ENCODE measurements at regions of chr20 and their contacts with region 1.

Region 1: GRCh38 chr20:41339507-41340326 is 904 bp upstream of the LPIN3 start:
- DNase-seq: peak; percentile 98 to 100
- H3K4me3 ChIP-seq: peak overlapping the region; percentile 51
- H3K4me3 Mint-ChIP-seq: peak overlapping the region; percentile 96
- H3K27ac Mint-ChIP-seq: peak overlapping the region; percentile 69
- H3K4me1 ChIP-seq: peaks cover 25% of the 10 kb centered on the region
- H3K4me1 Mint-ChIP-seq: peaks cover 21% of the 10 kb centered on the region
- H3K27me3 ChIP-seq: no peaks in the 10 kb centered on the region
- H3K27me3 Mint-ChIP-seq: no peaks in the 10 kb centered on the region
- CTCF ChIP-seq: peak; percentile 99 to 100

Region 2: DNA sequence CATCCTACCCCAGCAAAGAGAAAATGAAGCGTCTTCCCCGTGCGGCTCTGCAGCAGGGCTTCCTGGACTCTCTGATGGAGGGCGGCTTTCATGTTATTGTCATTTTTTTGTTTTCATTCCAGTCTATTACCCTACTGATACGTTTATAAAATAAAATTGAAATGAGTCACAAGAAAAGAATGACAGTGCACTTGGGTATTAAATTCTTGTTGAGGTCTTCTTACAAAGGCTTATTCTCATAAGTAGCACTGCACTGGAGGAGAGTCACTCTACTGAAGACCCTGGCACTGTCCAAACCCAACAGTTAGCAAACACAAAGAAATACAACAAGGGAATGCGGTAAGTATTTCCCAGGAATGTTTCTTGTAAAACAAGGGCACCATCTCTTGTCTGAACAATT is 1030.0 kb before region 1 on chr20:
- CTCF ChIA-PET with region 1: no interaction called
- POLR2A ChIA-PET with region 1: no interaction called
- intact Hi-C with region 1: no loop called
- DNase-seq: no peak
- H3K4me3 ChIP-seq: no peak overlapping the region
- H3K4me3 Mint-ChIP-seq: no peak overlapping the region
- H3K27ac Mint-ChIP-seq: no peak overlapping the region
- H3K4me1 ChIP-seq: no peaks in the 10 kb centered on the region
- H3K4me1 Mint-ChIP-seq: no peaks in the 10 kb centered on the region
- H3K27me3 ChIP-seq: no peaks in the 10 kb centered on the region
- H3K27me3 Mint-ChIP-seq: peaks cover 2% of the 10 kb centered on the region
- CTCF ChIP-seq: no peak

Region 3: GRCh38 chr20:41095110-41095969 is 244.4 kb before region 1 on chr20:
- CTCF ChIA-PET with region 1: interaction called, 10 read pairs
- POLR2A ChIA-PET with region 1: no interaction called
- intact Hi-C with region 1: no loop called
- DNase-seq: peak; percentile 66 to 75
- H3K4me3 ChIP-seq: no peak overlapping the region
- H3K4me3 Mint-ChIP-seq: no peak overlapping the region
- H3K27ac Mint-ChIP-seq: no peak overlapping the region
- H3K4me1 ChIP-seq: no peaks in the 10 kb centered on the region
- H3K4me1 Mint-ChIP-seq: no peaks in the 10 kb centered on the region
- H3K27me3 ChIP-seq: no peaks in the 10 kb centered on the region
- H3K27me3 Mint-ChIP-seq: no peaks in the 10 kb centered on the region
- CTCF ChIP-seq: peak; percentile 98 to 99

Region 4: DNA sequence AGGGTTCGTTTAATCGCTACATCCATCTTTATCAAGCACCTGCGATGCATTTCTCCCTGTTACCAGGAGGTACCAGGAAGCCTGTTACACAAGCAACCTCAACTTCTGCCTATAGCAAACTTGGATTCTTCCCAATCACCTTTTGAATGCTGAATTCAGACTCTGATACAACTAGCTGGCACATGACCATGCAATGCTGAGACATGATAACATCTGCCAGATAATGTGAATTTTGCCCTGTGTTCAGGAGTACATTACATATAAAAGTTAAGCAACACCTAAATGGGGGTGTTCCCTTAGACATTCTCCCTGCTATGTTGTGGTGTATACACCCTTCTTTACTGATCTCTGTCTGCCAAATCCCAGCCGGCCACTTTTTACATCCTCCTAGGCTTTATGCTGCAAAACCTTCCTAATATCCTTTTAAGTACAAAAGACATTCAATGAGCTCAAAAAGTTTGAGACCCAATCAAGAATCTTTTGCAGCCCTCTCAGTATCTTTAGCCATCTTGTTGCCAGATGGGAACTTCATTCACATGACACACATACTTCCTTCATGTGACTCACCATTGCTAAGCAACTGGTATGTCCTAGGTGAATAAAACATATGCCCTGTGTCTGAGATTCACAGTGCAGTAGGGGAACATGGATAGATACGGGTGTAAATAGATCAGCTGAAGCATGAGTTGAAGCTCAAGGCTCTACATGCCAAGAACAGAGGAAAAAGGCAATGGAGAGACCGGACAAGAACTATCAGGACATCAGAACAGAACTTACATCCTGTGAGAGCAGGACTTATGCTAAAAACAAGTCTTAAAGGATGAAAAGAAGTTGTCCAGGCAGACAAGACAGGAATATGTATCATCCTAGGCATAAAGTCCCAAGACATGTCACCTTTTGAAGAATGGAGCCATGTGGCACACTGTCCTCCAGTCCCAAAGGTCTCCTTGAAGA is 106.5 kb before region 1 on chr20:
- CTCF ChIA-PET with region 1: interaction called, 52 read pairs
- POLR2A ChIA-PET with region 1: interaction called, 5 read pairs
- intact Hi-C with region 1: loop called (anchors 1 kb)
- DNase-seq: no peak
- H3K4me3 ChIP-seq: no peak overlapping the region
- H3K4me3 Mint-ChIP-seq: peak overlapping the region; percentile 39
- H3K27ac Mint-ChIP-seq: peak overlapping the region; percentile 10
- H3K4me1 ChIP-seq: peaks cover 9% of the 10 kb centered on the region
- H3K4me1 Mint-ChIP-seq: peaks cover 9% of the 10 kb centered on the region
- H3K27me3 ChIP-seq: no peaks in the 10 kb centered on the region; the same call in 1 of the 2 replicates
- H3K27me3 Mint-ChIP-seq: no peaks in the 10 kb centered on the region
- CTCF ChIP-seq: no peak

Region 5: GRCh38 chr20:41350408-41350962 is 10.8 kb after region 1 on chr20:
- CTCF ChIA-PET with region 1: interaction called, 14 read pairs
- POLR2A ChIA-PET with region 1: interaction called, 8 read pairs
- intact Hi-C with region 1: no loop called
- DNase-seq: no peak
- H3K4me3 ChIP-seq: no peak overlapping the region
- H3K4me3 Mint-ChIP-seq: no peak overlapping the region
- H3K27ac Mint-ChIP-seq: no peak overlapping the region
- H3K4me1 ChIP-seq: no peaks in the 10 kb centered on the region
- H3K4me1 Mint-ChIP-seq: no peaks in the 10 kb centered on the region
- H3K27me3 ChIP-seq: no peaks in the 10 kb centered on the region
- H3K27me3 Mint-ChIP-seq: no peaks in the 10 kb centered on the region
- CTCF ChIP-seq: no peak

Region 6: DNA sequence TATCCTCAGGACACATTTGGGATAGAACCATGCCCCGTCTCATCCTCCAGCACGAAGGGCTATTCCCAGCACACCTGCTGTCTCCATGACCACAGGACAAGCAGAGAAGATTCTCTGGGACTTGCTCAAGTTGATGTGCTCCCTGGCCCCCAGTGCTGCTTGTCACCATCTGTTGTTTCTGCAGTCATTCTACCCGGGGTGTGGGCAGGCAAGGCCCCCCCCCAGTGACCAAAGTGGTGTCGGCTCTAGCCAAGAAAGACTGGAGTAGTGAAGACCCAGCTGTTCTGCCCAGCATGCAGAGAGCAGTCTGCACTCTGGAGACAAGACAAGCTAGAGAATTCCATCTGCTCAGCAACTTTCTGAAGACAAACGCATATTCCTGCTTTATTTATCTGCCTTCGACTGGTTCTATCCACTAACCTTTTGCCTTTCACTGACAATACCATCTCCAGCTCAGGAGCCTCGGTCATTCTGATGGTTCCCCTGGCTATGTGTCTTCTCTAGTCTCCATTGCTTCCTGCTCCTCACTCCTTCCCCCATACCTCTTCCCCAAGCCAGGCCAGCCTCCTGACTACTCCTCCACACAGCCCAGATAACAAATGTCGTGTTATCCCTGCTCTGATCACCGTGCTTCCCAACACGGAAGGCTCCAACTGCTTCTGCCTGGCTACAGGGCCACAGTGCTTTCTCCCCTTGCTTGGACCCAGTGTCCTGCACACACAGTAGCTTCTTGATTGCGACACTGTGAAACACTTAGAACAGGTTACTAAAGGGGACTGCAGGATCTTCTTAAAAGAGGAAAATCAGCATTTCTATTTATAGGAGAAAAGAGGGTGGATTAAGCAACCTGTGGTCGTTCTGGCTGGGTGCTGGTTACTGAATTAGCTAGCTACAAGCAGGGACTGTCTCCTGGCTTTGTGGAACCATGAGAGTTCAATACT is 113.6 kb after region 1 on chr20:
- CTCF ChIA-PET with region 1: no interaction called
- POLR2A ChIA-PET with region 1: no interaction called
- intact Hi-C with region 1: no loop called
- DNase-seq: peak in 1 of 2 experiments; percentile 31
- H3K4me3 ChIP-seq: no peak overlapping the region
- H3K4me3 Mint-ChIP-seq: no peak overlapping the region
- H3K27ac Mint-ChIP-seq: no peak overlapping the region
- H3K4me1 ChIP-seq: no peaks in the 10 kb centered on the region
- H3K4me1 Mint-ChIP-seq: peaks cover 8% of the 10 kb centered on the region
- H3K27me3 ChIP-seq: no peaks in the 10 kb centered on the region
- H3K27me3 Mint-ChIP-seq: no peaks in the 10 kb centered on the region
- CTCF ChIP-seq: no peak

Region 7: GRCh38 chr20:41476013-41476752 is 136.5 kb after region 1 on chr20:
- CTCF ChIA-PET with region 1: interaction called, 14 read pairs
- POLR2A ChIA-PET with region 1: interaction called, 3 read pairs
- intact Hi-C with region 1: loop called (anchors 5 kb)
- DNase-seq: no peak
- H3K4me3 ChIP-seq: no peak overlapping the region
- H3K4me3 Mint-ChIP-seq: no peak overlapping the region
- H3K27ac Mint-ChIP-seq: no peak overlapping the region
- H3K4me1 ChIP-seq: no peaks in the 10 kb centered on the region
- H3K4me1 Mint-ChIP-seq: no peaks in the 10 kb centered on the region
- H3K27me3 ChIP-seq: no peaks in the 10 kb centered on the region
- H3K27me3 Mint-ChIP-seq: no peaks in the 10 kb centered on the region
- CTCF ChIP-seq: no peak

Region 8: DNA sequence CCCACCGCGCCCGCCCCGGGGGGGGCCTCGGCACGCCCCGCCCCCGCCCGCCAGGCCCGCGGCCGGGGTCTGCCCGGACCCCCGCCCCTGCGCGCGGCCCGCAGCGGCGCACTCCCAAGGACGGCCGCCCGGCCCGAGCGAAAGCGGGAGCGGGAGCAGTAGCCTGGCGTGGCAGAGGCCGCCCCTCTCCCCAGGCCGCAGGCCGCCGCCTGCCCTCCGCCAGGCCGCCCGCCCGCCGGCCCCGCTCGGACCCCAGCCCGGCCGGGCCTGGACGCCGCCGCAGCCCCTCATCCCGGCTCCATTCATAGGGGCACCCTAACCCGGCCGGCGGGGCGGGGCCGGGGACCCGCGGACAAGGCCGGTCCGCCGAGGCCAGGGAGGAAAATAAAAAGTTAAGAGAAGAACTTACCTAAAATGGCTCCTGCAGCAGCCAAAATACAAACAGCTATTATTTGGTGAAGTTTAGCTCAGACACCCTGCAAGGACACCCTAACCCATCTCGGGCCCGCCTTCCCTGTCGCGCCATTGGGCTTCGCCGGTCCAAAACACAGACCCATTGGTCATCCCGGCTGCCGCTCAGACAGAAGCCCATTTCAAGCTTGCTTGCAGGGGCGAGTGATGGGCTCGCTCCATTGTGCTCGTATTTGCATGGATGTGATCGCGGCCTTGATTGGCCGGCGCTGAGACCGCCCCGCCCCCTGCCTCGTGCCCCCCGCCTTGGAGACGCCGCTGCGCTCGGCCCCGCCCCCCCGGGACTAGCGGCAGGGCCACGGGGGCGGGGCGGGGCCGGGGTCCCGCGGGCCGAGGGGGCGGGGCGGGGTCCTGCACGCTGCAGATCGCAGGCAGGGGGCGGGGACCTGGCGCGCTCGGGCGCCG is 278.5 kb after region 1 on chr20 and contains the start of gene CHD6:
- CTCF ChIA-PET with region 1: interaction called, 7 read pairs
- POLR2A ChIA-PET with region 1: no interaction called
- intact Hi-C with region 1: loop called (anchors 2 kb)
- DNase-seq: peak; percentile 100
- H3K4me3 ChIP-seq: peak within 1 kb of the TSS; percentile 67
- H3K4me3 Mint-ChIP-seq: peak within 1 kb of the TSS; percentile 86
- H3K27ac Mint-ChIP-seq: peak within 1 kb of the TSS; percentile 67
- H3K4me1 ChIP-seq: peaks cover 26% of the 10 kb centered on the region
- H3K4me1 Mint-ChIP-seq: peaks cover 42% of the 10 kb centered on the region
- H3K27me3 ChIP-seq: no peaks in the 10 kb centered on the region
- H3K27me3 Mint-ChIP-seq: no peaks in the 10 kb centered on the region
- CTCF ChIP-seq: no peak
- total RNA-seq, gene CHD6: 80.5 and 88.1 TPM in 2 replicates